Left lung (tissue), 14 donors: ENCODE measurements at regions of chr7 and their contacts with region 1.

Region 1: DNA sequence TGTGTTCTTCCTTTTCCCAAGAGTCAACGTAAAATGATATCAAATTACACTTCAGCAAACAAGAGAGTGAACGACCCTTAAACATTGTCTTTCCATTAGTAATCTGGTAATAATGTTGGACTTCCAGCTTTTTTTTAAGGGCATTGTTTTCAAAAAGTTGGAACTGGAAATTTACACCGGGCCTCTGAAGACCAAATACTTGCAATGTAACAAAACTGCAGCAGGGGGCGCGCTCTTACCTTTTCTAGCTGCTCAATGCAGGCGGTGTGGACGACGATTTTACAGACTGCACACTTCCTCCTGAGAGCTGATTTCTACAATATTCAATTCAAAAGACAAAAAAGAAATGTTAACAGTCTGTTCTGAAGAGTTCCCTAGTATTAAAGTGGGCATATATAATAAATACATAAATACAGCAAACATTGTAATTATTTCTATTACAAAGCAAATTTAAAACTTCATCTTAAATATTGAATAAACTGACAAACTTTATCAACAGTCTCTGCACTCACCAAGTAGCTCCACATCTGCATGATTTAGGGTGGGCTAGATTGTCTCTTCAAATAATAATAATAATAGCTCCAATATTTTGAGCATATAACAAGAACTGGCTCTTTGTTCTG is 190.4 kb downstream of the DGKI start:
- DNase-seq: peak; percentile 47 to 77 (median 72)
- ATAC-seq: peak; percentile 97
- H3K4me3 ChIP-seq: no peak overlapping the region
- H3K27ac ChIP-seq: no peak overlapping the region
- H3K4me1 ChIP-seq: peaks cover 3 to 5% of the 10 kb centered on the region in 2 donors
- H3K27me3 ChIP-seq: no peaks in the 10 kb centered on the region
- CTCF ChIP-seq: peak; percentile 73 to 81

Region 2: DNA sequence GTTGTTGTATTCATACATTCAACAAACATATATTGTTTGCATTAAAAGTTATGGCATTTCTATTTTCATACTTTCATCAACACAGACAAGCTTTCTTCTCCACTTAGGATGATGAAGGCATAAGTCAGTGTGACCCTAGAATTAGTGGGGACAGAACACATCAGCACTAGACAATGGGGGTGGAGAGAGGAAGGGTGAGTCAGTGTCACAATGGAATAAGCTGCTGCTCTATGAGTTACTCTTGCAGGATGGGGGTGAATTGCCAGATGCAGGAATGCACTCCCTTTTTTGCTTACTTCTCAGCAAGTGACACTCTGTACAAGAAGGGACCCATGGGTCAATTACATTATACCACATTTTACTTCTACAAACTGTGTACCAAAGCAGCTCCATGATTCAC is 116.4 kb after region 1 on chr7:
- intact Hi-C with region 1: no loop called
- DNase-seq: no peak
- ATAC-seq: peak; percentile 57
- H3K4me3 ChIP-seq: no peak overlapping the region
- H3K27ac ChIP-seq: no peak overlapping the region
- H3K4me1 ChIP-seq: no peaks in the 10 kb centered on the region
- H3K27me3 ChIP-seq: no peaks in the 10 kb centered on the region
- CTCF ChIP-seq: no peak

Region 3: GRCh38 chr7:138002096-138002827 is 345.9 kb after region 1 on chr7:
- intact Hi-C with region 1: loop called in 1 of 2 experiments (anchors 10 kb)
- DNase-seq: peak; percentile 96 to 100 (median 99)
- ATAC-seq: peak; percentile 94
- H3K4me3 ChIP-seq: peak overlapping the region; percentile 92 to 97
- H3K27ac ChIP-seq: peak overlapping the region; percentile 94 to 97
- H3K4me1 ChIP-seq: peaks cover 16 to 38% of the 10 kb centered on the region in 2 donors
- H3K27me3 ChIP-seq: no peaks in the 10 kb centered on the region
- CTCF ChIP-seq: peak; percentile 90 to 92